ENCODE measurements at regions of chr11 and their contacts with region 1.

Region 1: GRCh38 chr11:112588252-112588694 is 327.6 kb upstream of the PLET1 start:
- DNase-seq: no peak
- ATAC-seq: peak; percentile 84
- H3K4me3 ChIP-seq: no peak overlapping the region
- H3K27ac ChIP-seq: no peak overlapping the region
- H3K4me1 ChIP-seq: no peaks in the 10 kb centered on the region
- H3K27me3 ChIP-seq: no peaks in the 10 kb centered on the region
- CTCF ChIP-seq: peak; percentile 74

Region 2: DNA sequence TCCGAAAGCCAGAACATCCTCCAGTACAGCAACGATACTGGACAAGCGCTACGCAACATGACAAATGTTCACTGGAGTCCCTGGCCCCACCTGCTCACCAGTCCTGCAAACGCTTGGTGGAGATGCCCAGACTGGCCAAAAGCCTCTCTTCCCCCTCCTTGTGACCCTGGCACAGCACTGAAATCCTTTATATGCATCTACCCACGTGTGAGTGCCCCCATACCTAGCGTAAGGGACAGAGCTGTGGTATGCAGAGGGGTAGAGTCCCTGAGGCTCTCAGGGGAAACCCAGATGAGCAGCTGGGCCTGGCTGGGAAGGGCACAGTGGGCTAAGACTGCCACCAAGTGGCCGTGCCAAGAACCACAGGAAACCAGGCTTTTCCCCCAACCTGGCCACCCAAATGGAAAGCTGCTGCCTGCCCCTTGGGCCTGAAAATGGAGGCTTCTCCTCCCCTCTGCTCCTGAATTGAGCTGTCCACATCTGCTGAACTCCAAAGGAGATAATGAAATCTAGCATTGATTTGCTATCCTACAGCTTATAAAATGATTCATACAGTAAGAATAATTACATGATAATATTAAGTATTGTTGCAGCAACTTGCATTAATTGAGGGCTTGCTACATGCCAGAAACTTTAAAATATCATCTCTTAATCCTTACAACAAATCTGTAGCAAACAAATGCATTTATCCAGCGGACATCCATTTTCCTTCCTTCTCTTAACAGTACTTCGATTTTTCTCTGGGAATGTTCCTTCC is 701.3 kb after region 1 on chr11:
- intact Hi-C with region 1: loop called (anchors 5 kb)
- DNase-seq: peak; percentile 79
- ATAC-seq: peak; percentile 92
- H3K4me3 ChIP-seq: no peak overlapping the region
- H3K27ac ChIP-seq: no peak overlapping the region
- H3K4me1 ChIP-seq: no peaks in the 10 kb centered on the region
- H3K27me3 ChIP-seq: peaks cover 6% of the 10 kb centered on the region
- CTCF ChIP-seq: peak; percentile 93

Measured in upper lobe of right lung (tissue), 1 donor.